Mammary epithelial cell (primary cell): ENCODE measurements at regions of chr17 and their contacts with region 1.

Region 1: GRCh38 chr17:35981908-35982330 is 622 bp upstream of the CCL16 start:
- DNase-seq: no peak
- H3K4me3 ChIP-seq: no peak overlapping the region
- H3K27ac ChIP-seq: no peak overlapping the region
- H3K4me1 ChIP-seq: no peaks in the 10 kb centered on the region
- H3K27me3 ChIP-seq: no peaks in the 10 kb centered on the region
- CTCF ChIP-seq: no peak

Region 2: DNA sequence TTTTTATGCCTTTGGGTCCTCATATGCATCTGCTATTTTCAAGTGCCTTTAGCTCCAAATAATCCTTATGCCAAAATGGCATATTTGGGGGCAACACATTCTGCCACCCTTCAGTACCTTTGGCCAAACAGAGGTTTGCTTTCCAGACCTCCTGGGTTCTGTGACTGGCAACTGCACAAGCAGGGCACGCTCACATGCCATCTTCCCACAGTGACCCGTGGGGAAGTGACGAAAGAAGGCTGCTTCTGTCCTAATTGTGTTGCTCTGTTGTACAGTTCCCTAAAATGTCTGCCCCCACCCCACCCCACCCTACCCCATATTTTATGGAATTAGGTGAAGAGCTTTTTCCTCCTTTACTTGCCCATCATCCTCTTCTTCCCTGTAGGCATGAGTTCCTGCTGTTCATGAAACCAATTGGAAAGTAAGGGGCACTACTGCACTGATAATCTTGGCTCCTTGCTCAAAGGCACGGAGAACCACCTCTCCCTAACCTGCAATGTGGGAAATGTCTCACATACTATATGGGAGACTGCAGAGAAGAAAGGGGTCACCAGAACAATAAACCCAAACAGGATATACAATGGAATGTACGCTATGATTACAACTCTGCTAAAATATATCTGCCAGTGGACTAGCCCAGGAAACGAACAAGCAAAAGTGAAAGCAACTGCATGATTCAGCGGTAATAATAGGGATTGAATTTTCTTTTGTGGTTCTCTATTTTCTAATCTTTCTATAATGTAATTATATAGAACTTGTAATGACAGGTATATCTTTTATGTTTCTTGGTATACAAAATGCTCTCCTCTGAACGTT is 441.1 kb before region 1 on chr17:
- CTCF ChIA-PET with region 1: no interaction called
- dilution Hi-C with region 1: no loop called
- in situ Hi-C with region 1: no loop called
- intact Hi-C with region 1: no loop called
- DNase-seq: no peak
- H3K4me3 ChIP-seq: no peak overlapping the region
- H3K27ac ChIP-seq: no peak overlapping the region
- H3K4me1 ChIP-seq: no peaks in the 10 kb centered on the region
- H3K27me3 ChIP-seq: peaks cover 2% of the 10 kb centered on the region
- CTCF ChIP-seq: no peak

Region 3: GRCh38 chr17:36024106-36024869 is 42.4 kb after region 1 on chr17:
- CTCF ChIA-PET with region 1: no interaction called
- dilution Hi-C with region 1: loop called (anchors 5 kb)
- in situ Hi-C with region 1: no loop called
- intact Hi-C with region 1: no loop called
- DNase-seq: no peak
- H3K4me3 ChIP-seq: no peak overlapping the region
- H3K27ac ChIP-seq: no peak overlapping the region
- H3K4me1 ChIP-seq: no peaks in the 10 kb centered on the region
- H3K27me3 ChIP-seq: peaks cover 2% of the 10 kb centered on the region
- CTCF ChIP-seq: no peak

Region 4: GRCh38 chr17:36048066-36048465 is 66.1 kb after region 1 on chr17:
- CTCF ChIA-PET with region 1: no interaction called
- dilution Hi-C with region 1: no loop called
- in situ Hi-C with region 1: loop called in 1 of 2 experiments (anchors 10 kb)
- intact Hi-C with region 1: no loop called
- DNase-seq: no peak
- H3K4me3 ChIP-seq: no peak overlapping the region
- H3K27ac ChIP-seq: no peak overlapping the region
- H3K4me1 ChIP-seq: no peaks in the 10 kb centered on the region
- H3K27me3 ChIP-seq: no peaks in the 10 kb centered on the region
- CTCF ChIP-seq: no peak